Activated CD8-positive, alpha-beta memory T cell treated with anti-CD3 and anti-CD28 coated beads, Interleukin-2, amount 10 ng/mL, durations not matched to agents 7 days and 5 days (primary cell): ENCODE measurements at regions of chr1 and their contacts with region 1.

Region 1: DNA sequence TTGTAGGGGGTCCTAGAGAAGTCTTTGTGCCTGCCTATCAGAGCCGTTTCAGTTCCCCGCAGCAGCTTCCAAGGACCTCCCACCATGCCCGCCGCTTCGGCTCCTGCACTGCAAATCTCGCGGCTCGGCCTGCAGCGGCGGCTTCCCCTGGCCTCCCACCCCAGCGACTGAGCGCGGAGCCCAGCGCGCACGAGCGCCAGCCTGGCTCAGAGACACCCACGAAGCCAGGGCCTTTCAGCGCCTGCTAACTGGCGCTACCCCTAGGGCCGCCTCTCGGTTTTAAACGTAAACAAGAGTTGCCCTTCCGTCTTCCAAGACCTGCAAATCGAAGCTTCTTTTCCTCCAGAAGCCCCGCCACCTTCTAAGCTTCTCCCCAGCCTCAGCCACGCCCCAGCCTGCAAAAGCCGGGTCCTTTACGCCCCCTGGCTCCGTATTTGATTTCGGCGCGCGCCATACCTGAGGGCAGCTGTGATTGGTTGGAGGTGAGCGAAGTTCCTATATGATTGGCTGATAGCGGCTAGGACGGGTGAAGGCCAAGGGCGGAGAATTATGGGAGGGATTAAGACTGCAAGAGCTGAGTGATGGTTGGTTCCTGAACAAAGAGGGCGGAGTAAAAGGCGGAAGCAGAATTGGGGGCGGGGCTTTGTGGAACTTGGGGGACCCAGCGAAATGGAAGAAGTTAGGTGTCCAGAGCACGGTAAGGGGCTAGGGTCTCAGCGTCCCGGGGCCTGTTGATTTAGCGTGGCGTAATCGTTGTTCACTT is at the start of gene TTF2:
- DNase-seq: peak; percentile 99
- ATAC-seq: peak; percentile 91
- H3K4me3 Mint-ChIP-seq: no peak within 1 kb of the TSS
- H3K27ac Mint-ChIP-seq: no peak within 1 kb of the TSS
- H3K4me1 Mint-ChIP-seq: peaks cover 55% of the 10 kb centered on the region
- H3K27me3 Mint-ChIP-seq: no peaks in the 10 kb centered on the region
- total RNA-seq, gene TTF2: 156 to 157 TPM

Region 2: GRCh38 chr1:116574581-116575291 is 485.1 kb before region 1 on chr1:
- CTCF ChIA-PET with region 1: interaction called, 19 read pairs
- DNase-seq: peak; percentile 76
- ATAC-seq: no peak
- H3K4me3 Mint-ChIP-seq: no peak overlapping the region
- H3K27ac Mint-ChIP-seq: no peak overlapping the region
- H3K4me1 Mint-ChIP-seq: peaks cover 30% of the 10 kb centered on the region
- H3K27me3 Mint-ChIP-seq: peaks cover 5% of the 10 kb centered on the region

Region 3: GRCh38 chr1:116724765-116725375 is 335.0 kb before region 1 on chr1:
- CTCF ChIA-PET with region 1: interaction called, 28 read pairs
- DNase-seq: peak; percentile 86
- ATAC-seq: peak; percentile 83
- H3K4me3 Mint-ChIP-seq: no peak overlapping the region
- H3K27ac Mint-ChIP-seq: no peak overlapping the region
- H3K4me1 Mint-ChIP-seq: peaks cover 25% of the 10 kb centered on the region
- H3K27me3 Mint-ChIP-seq: no peaks in the 10 kb centered on the region

Region 4: DNA sequence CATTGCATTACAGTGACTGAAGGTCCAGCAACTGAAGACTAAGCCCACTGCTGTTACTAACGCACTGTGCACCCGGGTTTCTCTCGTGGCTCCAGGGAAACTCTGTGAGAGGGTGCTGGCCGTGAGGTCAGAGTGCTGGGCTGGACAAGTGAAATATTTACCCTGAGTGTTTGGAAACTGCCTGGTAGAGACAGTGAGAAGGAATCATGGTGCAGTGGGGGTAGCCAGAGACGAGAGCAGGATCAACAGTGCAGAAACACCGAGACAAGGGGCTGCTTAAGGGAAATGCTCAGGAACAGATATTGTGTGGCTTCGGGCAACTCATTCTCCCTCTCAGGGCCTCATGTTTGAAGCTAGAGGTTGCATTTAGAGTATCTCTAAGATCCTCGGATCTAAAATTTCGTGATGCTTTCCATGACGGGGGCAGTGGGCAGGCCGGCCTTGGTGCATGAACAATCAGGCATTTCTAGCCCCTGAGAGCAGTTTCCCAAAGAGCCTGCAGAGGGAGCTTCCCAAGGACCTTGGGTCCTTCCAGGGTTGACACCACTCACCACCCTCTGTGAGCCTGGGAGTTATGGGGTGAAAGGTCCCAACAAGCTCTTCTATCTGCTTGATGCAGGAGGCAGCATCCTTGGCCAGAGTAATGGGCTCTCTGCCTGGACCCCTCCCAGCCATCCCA is 295.9 kb before region 1 on chr1:
- CTCF ChIA-PET with region 1: interaction called, 16 read pairs
- DNase-seq: peak; percentile 83
- ATAC-seq: peak; percentile 20
- H3K4me3 Mint-ChIP-seq: peak overlapping the region; percentile 65
- H3K27ac Mint-ChIP-seq: peak overlapping the region; percentile 97
- H3K4me1 Mint-ChIP-seq: peaks cover 96% of the 10 kb centered on the region
- H3K27me3 Mint-ChIP-seq: no peaks in the 10 kb centered on the region

Region 5: DNA sequence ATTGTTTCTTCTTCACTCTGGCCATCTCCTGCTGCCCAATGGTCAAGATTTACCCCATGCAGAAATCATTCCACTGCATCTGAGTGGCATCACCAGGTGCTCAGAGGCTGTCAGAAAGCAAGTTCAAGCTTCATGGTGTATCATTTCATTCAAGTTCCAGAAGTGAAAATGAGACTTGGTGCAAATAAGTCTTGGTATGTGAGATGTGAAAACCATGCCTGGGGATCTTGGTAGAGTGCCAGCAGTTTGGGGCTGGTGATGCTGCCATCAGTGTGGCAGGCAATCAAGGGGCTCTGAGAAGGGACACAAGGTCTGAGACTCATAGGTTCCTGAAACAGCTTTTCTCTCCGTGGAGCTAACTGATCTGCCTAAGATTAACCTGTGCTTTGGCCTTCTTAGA is 253.6 kb before region 1 on chr1:
- CTCF ChIA-PET with region 1: interaction called, 10 read pairs
- DNase-seq: peak; percentile 81
- ATAC-seq: peak; percentile 34
- H3K4me3 Mint-ChIP-seq: peak overlapping the region; percentile 80
- H3K27ac Mint-ChIP-seq: peak overlapping the region; percentile 97
- H3K4me1 Mint-ChIP-seq: peaks cover 85% of the 10 kb centered on the region
- H3K27me3 Mint-ChIP-seq: no peaks in the 10 kb centered on the region

Region 6: GRCh38 chr1:116817582-116818064 is 242.2 kb before region 1 on chr1:
- CTCF ChIA-PET with region 1: interaction called, 14 read pairs
- DNase-seq: peak; percentile 87
- ATAC-seq: peak; percentile 76
- H3K4me3 Mint-ChIP-seq: peak overlapping the region; percentile 33
- H3K27ac Mint-ChIP-seq: peak overlapping the region; percentile 81
- H3K4me1 Mint-ChIP-seq: peaks cover 65% of the 10 kb centered on the region
- H3K27me3 Mint-ChIP-seq: no peaks in the 10 kb centered on the region

Region 7: DNA sequence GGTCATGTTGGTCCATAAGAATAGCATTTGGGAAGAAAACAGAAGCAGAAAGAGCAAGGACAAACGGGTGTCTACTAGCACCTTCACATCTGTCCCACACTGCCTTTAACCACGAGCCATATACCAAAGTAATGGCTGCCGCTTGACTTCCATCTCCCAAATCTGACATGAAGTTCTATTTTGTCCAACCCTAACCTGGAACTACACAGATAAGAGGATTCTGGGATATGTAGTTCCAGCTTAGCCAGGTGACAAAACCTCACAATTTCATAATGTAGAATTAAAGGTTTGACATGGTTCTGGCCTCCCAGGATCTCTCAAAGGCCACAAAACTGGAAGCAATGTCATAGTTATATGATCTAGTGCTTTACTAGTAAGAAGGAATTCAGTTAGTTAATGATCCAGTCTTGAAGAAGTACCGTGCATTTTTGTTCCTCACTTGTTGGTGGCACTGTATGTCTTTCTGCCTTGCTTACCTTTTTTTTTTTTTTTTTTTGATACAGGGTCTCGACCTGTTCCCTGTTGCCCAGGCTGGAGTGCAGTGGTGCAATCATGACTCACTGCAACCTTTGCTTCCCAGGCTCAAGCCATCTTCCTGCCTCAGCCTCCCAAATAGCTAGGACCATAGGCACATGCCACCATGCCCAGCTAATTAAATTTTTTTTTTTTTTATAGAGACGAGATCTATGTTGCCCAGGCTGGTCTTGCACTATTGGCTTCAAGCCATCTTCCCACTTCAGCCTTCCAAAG is 132.6 kb before region 1 on chr1:
- CTCF ChIA-PET with region 1: no interaction called
- DNase-seq: no peak
- ATAC-seq: no peak
- H3K4me3 Mint-ChIP-seq: no peak overlapping the region
- H3K27ac Mint-ChIP-seq: no peak overlapping the region
- H3K4me1 Mint-ChIP-seq: no peaks in the 10 kb centered on the region
- H3K27me3 Mint-ChIP-seq: peaks cover 9% of the 10 kb centered on the region